ENCODE measurements at regions of chr1 and their contacts with region 1.

Region 1: GRCh38 chr1:42766741-42767509 is at the starts of genes C1orf50 and P3H1:
- DNase-seq: peak; percentile 83 to 96
- ATAC-seq: peak; percentile 86 to 98
- H3K4me3 ChIP-seq: peak within 1 kb of the TSS; percentile 95
- H3K27ac ChIP-seq: peak within 1 kb of the TSS; percentile 83 to 96
- H3K4me1 ChIP-seq: peaks cover 16% of the 10 kb centered on the region; the same call in 2 of the 3 replicates
- CTCF ChIP-seq: no peak
- EP300 ChIP-seq: no peak
- POLR2A ChIP-seq: peak; percentile 87
- RAD21 ChIP-seq: no peak
- polyA plus RNA-seq, gene C1orf50: 2.6 and 4.5 TPM in 2 replicates
- polyA plus RNA-seq, gene P3H1: 27.3 and 32.0 TPM in 2 replicates

Region 2: GRCh38 chr1:42681741-42682483 is 85.0 kb before region 1 on chr1 and contains the start of gene YBX1:
- CTCF ChIA-PET with region 1: interaction called, 3 read pairs
- POLR2A ChIA-PET with region 1: interaction called, 11 read pairs
- DNase-seq: peak; percentile 95 to 97
- ATAC-seq: peak; percentile 92 to 96
- H3K4me3 ChIP-seq: peak within 1 kb of the TSS; percentile 94
- H3K27ac ChIP-seq: peak within 1 kb of the TSS; percentile 92 to 98
- H3K4me1 ChIP-seq: peaks cover 34% of the 10 kb centered on the region
- CTCF ChIP-seq: no peak
- EP300 ChIP-seq: no peak
- POLR2A ChIP-seq: peak; percentile 53
- RAD21 ChIP-seq: no peak
- polyA plus RNA-seq, gene YBX1: 345 and 488 TPM in 2 replicates

Region 3: DNA sequence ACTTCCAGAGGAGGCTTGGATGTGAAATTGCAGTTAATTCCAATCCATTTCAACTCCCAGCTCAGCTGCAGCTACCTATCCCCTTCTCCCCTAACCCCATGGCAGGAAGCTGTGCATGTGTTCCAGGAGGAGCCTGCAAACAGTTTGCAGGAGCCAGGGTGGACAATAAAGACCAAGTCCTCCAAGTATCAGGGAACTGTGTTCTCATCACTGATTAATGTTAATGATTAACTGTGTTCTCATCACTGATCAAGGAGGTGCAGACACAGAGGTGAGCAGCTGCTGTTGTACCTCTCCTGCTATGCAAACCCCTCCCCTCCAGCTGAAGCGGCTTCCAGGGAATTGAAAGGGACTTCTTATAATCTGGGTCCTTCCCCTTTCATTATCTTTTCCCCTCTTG is 46.1 kb before region 1 on chr1:
- CTCF ChIA-PET with region 1: no interaction called
- POLR2A ChIA-PET with region 1: no interaction called
- DNase-seq: no peak
- ATAC-seq: no peak; a peak in 1 of 6 replicates
- H3K4me3 ChIP-seq: no peak overlapping the region
- H3K27ac ChIP-seq: no peak overlapping the region
- H3K4me1 ChIP-seq: no peaks in the 10 kb centered on the region
- CTCF ChIP-seq: no peak
- EP300 ChIP-seq: no peak
- POLR2A ChIP-seq: no peak
- RAD21 ChIP-seq: no peak

Region 4: GRCh38 chr1:42777852-42778251 is 10.9 kb after region 1 on chr1:
- CTCF ChIA-PET with region 1: interaction called, 10 read pairs
- POLR2A ChIA-PET with region 1: interaction called, 4 read pairs
- DNase-seq: peak; percentile 43 to 60
- ATAC-seq: peak; percentile 81 to 83; a peak in 5 of 6 replicates
- H3K4me3 ChIP-seq: no peak overlapping the region
- H3K27ac ChIP-seq: no peak overlapping the region
- H3K4me1 ChIP-seq: no peaks in the 10 kb centered on the region
- CTCF ChIP-seq: peak; percentile 61
- EP300 ChIP-seq: no peak
- POLR2A ChIP-seq: no peak
- RAD21 ChIP-seq: peak; percentile 74 to 82

Region 5: GRCh38 chr1:42816585-42817434 is 49.9 kb after region 1 on chr1 and contains the starts of genes ERMAP and SVBP:
- CTCF ChIA-PET with region 1: no interaction called
- POLR2A ChIA-PET with region 1: interaction called, 15 read pairs
- DNase-seq: peak; percentile 60 to 82
- ATAC-seq: peak; percentile 96 to 97
- H3K4me3 ChIP-seq: peak within 1 kb of the TSS; percentile 52
- H3K27ac ChIP-seq: peak within 1 kb of the TSS; percentile 97 to 98
- H3K4me1 ChIP-seq: peaks cover 31% of the 10 kb centered on the region; the same call in 2 of the 3 replicates
- CTCF ChIP-seq: no peak
- EP300 ChIP-seq: no peak
- POLR2A ChIP-seq: peak; percentile 31
- RAD21 ChIP-seq: no peak
- polyA plus RNA-seq, gene ERMAP: 9.5 and 10.7 TPM in 2 replicates
- polyA plus RNA-seq, gene SVBP: 22.6 and 24.8 TPM in 2 replicates

Measured in A549 (cell line).